ENCODE measurements at regions of chr7 and their contacts with region 1.

Region 1: DNA sequence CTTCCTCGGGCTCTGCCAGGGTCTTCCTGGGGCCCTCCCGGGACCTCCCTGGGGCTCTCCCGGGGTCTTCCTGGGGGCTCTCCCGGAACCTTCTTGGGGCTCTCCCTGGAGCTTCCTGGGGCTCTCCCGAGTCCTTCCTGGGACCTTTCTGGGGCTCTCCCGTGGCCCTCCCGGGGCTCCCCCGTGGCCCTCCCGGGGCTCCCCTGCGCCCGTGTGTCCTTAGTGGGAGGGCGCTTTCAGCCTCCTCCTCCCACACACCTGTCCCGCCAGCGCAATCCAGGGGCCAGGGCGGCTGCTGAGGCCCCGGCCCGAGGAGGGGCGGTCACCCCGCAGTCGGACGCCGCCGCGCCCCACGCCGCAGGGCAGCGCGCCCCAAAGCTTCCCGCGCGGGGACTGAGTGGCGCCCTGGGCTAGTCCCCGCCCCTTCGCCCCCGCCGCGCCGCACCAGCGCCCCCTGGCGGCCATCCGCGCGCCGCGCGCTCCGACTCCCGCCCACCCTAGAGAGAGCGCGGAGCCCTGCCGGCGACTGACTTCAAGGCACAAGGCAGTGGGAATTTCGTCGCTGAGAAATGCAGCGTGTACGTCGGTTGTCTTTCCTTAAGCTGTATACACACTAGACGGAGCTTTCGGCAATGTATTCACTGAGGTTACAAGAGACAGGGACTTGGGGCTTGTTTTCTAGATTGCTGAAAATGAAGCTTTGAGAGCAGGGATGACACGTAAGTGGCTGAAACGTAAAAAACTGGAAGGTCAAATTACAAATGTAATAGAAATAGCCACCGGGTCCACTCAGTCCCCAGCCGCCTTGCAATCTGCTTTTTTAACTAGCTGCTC is 47.1 kb downstream of the INSIG1 start:
- DNase-seq: no peak
- H3K4me3 ChIP-seq: peak overlapping the region; percentile 21 to 49
- H3K27ac ChIP-seq: no peak overlapping the region
- H3K4me1 ChIP-seq: peaks cover 4% of the 10 kb centered on the region
- H3K27me3 ChIP-seq: no peaks in the 10 kb centered on the region
- CTCF ChIP-seq: peak; percentile 74 to 97 (median 93)
- POLR2A ChIP-seq: no peak

Region 2: GRCh38 chr7:155190688-155191087 is 154.1 kb before region 1 on chr7:
- intact Hi-C with region 1: loop called (anchors 2 kb)
- DNase-seq: no peak
- H3K4me3 ChIP-seq: no peak overlapping the region
- H3K27ac ChIP-seq: no peak overlapping the region
- H3K4me1 ChIP-seq: peaks cover 9% of the 10 kb centered on the region
- H3K27me3 ChIP-seq: no peaks in the 10 kb centered on the region
- CTCF ChIP-seq: peak; percentile 75 to 90 (median 76)
- POLR2A ChIP-seq: no peak

Region 3: GRCh38 chr7:157009768-157010587 is 1665.2 kb after region 1 on chr7:
- intact Hi-C with region 1: no loop called
- DNase-seq: no peak
- H3K4me3 ChIP-seq: peak overlapping the region; percentile 36 to 40
- H3K27ac ChIP-seq: no peak overlapping the region
- H3K4me1 ChIP-seq: peaks cover 16% of the 10 kb centered on the region
- H3K27me3 ChIP-seq: peaks cover 24% of the 10 kb centered on the region
- CTCF ChIP-seq: no peak
- POLR2A ChIP-seq: no peak

Measured in vagina (tissue), 2 donors.